ENCODE measurements at regions of chr14 and their contacts with region 1.

Region 1: DNA sequence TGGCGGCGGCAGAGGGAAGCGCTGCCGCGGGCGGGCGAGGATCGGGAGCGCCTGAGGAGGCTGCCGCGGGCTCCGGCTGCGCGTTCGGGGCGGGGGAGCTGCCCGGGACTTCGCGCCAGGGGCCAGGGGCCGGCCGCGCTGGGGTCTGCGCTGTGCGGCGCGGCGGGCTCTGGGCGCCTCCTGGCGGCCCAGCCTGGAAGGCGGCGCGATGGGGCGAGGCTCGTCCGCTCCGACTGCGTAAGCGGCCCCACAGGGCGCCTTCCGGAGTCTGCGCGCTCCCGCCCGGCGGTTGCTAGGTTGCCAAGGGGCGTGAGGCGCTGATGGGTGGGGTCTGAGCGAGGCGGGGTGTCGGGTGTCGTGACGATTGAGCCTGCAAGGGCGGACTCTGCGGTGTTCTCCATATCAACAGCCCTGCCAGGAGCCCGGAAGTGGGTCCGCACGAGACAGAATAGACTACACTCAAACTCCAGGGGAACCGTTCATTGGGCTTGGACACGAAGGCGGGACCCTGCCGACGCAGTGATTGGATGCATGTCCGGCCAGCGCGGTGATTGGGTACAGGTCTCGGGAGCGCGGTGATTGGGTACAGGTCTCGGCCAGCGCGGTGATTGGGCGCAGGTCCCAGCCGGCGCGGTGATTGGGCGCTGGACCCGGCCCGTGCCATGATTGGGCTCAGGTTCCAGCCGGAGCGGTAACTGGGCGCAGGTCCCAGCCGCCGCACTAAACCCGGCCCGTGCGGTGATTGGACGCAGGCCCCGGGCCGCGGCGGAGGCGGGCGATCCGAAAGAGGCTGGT is at the start of gene TEDC1:
- DNase-seq: peak; percentile 99
- H3K4me3 Mint-ChIP-seq: peak within 1 kb of the TSS; percentile 87
- H3K27ac Mint-ChIP-seq: peak within 1 kb of the TSS; percentile 90
- H3K4me1 Mint-ChIP-seq: peaks cover 10% of the 10 kb centered on the region
- H3K27me3 Mint-ChIP-seq: no peaks in the 10 kb centered on the region
- total RNA-seq, gene TEDC1: 44.5 and 46.1 TPM in 2 replicates

Region 2: DNA sequence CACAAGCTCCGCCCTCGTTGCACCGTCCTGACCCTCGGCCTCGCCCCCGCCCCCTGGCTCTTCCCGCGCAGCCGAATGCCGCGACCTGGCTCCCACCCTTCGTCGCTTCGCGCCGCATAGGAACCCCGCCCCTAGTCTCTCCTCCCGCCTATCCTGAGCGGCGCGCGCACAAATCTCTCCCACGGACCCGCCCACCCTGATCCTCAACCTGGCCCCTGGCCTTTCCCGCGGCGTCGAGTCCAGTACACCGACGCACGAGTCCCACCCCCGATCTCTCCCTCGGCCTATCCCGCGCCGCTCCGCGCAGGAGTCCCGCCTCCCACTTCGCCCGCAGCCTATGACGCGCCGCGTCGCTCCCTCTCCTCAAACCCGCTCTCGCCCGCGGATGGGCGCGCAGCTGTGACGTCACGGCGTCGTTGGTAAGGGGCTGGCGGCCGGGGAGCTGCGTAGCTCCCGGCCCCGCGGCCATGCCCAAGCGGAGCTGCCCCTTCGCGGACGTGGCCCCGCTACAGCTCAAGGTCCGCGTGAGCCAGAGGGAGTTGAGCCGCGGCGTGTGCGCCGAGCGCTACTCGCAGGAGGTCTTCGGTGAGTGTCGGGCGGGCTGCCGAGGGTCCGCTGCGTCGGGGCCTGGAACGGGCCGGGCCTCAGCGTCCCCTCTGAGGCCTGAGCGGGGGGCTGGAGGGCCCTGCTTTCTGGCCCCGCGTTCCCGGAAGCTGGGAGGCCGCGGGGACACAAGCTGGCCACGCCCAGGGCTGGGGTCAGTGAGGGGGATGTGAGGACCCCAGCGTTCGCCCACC is 737.8 kb before region 1 on chr14 and contains the start of gene SIVA1:
- intact Hi-C with region 1: loop called (anchors 1 kb)
- DNase-seq: peak; percentile 100
- H3K4me3 Mint-ChIP-seq: peak within 1 kb of the TSS; percentile 92
- H3K27ac Mint-ChIP-seq: peak within 1 kb of the TSS; percentile 90
- H3K4me1 Mint-ChIP-seq: peaks cover 21% of the 10 kb centered on the region
- H3K27me3 Mint-ChIP-seq: peaks cover 2% of the 10 kb centered on the region
- total RNA-seq, gene SIVA1: 111 and 113 TPM in 2 replicates

Region 3: GRCh38 chr14:104895786-104896661 is 594.7 kb before region 1 on chr14:
- intact Hi-C with region 1: no loop called
- DNase-seq: no peak
- H3K4me3 Mint-ChIP-seq: no peak overlapping the region
- H3K27ac Mint-ChIP-seq: no peak overlapping the region
- H3K4me1 Mint-ChIP-seq: no peaks in the 10 kb centered on the region
- H3K27me3 Mint-ChIP-seq: peaks cover 8% of the 10 kb centered on the region

Region 4: DNA sequence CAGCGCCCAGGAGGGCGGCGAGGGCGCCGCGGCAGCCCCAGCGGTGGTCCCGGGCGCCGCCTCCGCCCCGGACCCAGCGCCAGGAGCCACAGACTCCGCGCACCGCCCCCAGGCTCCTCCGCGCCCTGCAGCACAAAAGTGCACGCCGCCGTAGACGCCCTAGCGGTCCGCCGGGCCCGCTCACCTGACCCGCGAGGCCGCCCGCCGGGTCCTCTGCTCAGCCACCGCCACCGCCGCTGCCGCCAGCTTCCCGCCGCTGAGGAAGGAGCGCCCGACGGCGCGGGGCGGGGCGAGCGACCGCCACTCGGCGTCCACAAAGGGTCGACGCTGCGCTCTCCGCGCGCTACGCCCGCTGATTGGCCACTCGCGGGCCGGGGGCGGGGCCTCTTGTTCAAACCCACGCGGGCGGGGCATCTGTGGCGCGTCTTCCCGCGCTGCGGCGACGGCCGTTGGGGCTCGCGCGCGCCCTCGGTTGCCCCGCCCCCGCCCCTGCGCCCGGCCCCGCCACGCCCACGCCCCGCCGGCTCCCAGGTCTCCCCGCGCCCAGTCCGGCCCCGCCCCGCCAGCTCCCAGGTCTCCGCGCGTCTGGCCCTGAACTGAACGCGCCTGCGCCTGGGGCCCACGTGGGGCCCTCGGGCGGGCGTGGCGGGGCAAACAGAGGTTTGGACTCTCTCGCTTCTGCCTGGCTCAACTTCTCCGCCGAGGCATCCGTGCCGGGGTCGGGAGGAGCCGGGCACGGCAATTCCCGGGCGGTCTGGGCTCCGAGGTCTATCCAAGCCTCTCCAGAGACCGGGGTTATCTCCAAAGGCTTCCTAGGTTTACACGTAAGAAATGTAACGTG is 469.7 kb before region 1 on chr14 and contains the start of gene CDCA4:
- intact Hi-C with region 1: loop called (anchors 1 kb)
- DNase-seq: peak; percentile 97
- H3K4me3 Mint-ChIP-seq: peak within 1 kb of the TSS; percentile 99
- H3K27ac Mint-ChIP-seq: peak within 1 kb of the TSS; percentile 86
- H3K4me1 Mint-ChIP-seq: peaks cover 72% of the 10 kb centered on the region
- H3K27me3 Mint-ChIP-seq: no peaks in the 10 kb centered on the region
- total RNA-seq, gene CDCA4: 62.5 and 63.7 TPM in 2 replicates

Region 5: GRCh38 chr14:105300792-105301533 is 189.8 kb before region 1 on chr14 and contains the start of gene BRF1:
- intact Hi-C with region 1: loop called (anchors 1 kb)
- DNase-seq: peak; percentile 97
- H3K4me3 Mint-ChIP-seq: peak within 1 kb of the TSS; percentile 91
- H3K27ac Mint-ChIP-seq: peak within 1 kb of the TSS; percentile 91
- H3K4me1 Mint-ChIP-seq: peaks cover 36% of the 10 kb centered on the region
- H3K27me3 Mint-ChIP-seq: peaks cover 4% of the 10 kb centered on the region
- total RNA-seq, gene BRF1: 46.1 and 46.9 TPM in 2 replicates

Region 6: GRCh38 chr14:105398044-105398725 is 92.6 kb before region 1 on chr14 and contains the start of gene TEX22:
- intact Hi-C with region 1: loop called (anchors 1 kb)
- DNase-seq: peak; percentile 86
- H3K4me3 Mint-ChIP-seq: peak within 1 kb of the TSS; percentile 93
- H3K27ac Mint-ChIP-seq: peak within 1 kb of the TSS; percentile 89
- H3K4me1 Mint-ChIP-seq: peaks cover 13% of the 10 kb centered on the region
- H3K27me3 Mint-ChIP-seq: no peaks in the 10 kb centered on the region
- total RNA-seq, gene TEX22: 7.4 and 9.1 TPM in 2 replicates

Region 7: DNA sequence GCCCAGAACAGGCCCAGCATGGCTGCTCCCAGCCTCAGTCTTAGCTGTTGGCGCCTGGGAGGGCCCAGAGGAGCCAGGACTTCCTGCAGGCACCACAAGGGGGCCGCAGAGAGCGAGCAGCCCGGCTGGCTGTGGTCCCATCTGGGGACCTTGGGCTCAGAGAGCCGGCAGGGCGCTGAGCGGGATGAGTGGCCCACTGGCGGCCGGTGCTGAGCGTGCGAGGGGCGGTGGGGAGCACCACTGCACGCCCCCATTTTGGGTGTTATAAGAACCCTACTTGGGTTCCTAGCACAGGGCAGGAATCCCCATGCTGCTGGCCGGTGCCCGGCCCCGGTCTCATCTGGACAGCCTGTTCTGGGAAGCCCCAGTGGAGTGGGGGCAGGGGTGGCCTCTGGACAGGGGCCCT is 42.1 kb before region 1 on chr14:
- intact Hi-C with region 1: loop called (anchors 1 kb)
- DNase-seq: peak; percentile 42
- H3K4me3 Mint-ChIP-seq: no peak overlapping the region
- H3K27ac Mint-ChIP-seq: no peak overlapping the region
- H3K4me1 Mint-ChIP-seq: no peaks in the 10 kb centered on the region
- H3K27me3 Mint-ChIP-seq: no peaks in the 10 kb centered on the region

Region 8: GRCh38 chr14:105517096-105517495 is 26.3 kb after region 1 on chr14:
- intact Hi-C with region 1: no loop called
- DNase-seq: no peak
- H3K4me3 Mint-ChIP-seq: no peak overlapping the region
- H3K27ac Mint-ChIP-seq: no peak overlapping the region
- H3K4me1 Mint-ChIP-seq: no peaks in the 10 kb centered on the region
- H3K27me3 Mint-ChIP-seq: peaks cover 21% of the 10 kb centered on the region

Region 9: GRCh38 chr14:105527661-105528581 is 37.2 kb after region 1 on chr14:
- intact Hi-C with region 1: loop called (anchors 1 kb)
- DNase-seq: peak; percentile 75
- H3K4me3 Mint-ChIP-seq: peak overlapping the region; percentile 77
- H3K27ac Mint-ChIP-seq: peak overlapping the region; percentile 71
- H3K4me1 Mint-ChIP-seq: no peaks in the 10 kb centered on the region
- H3K27me3 Mint-ChIP-seq: peaks cover 28% of the 10 kb centered on the region

Measured in activated T-helper 1 cell treated with anti-CD3 and anti-CD28 coated beads, Interleukin-12 subunit alpha, Interleukin-12 subunit beta, Interleukin-2, Interleukin-4 antibody, amounts not matched to agents 30 ng/mL and 10 ng/mL and 1 ng/mL, durations not matched to agents 14 hours and 24 hours and 36 hours (primary cell).